WTC11 (cell line): ENCODE measurements at regions of chr1 and their contacts with region 1.

Region 1: GRCh38 chr1:152869808-152870419 is 8.2 kb upstream of the SMCP start:
- DNase-seq: peak; percentile 26
- ATAC-seq: peak; percentile 74
- H3K4me3 Mint-ChIP-seq: no peak overlapping the region
- H3K27ac Mint-ChIP-seq: no peak overlapping the region
- H3K4me1 Mint-ChIP-seq: no peaks in the 10 kb centered on the region
- H3K27me3 Mint-ChIP-seq: no peaks in the 10 kb centered on the region; the same call in 1 of the 2 replicates
- CTCF ChIP-seq: no peak

Region 2: GRCh38 chr1:152582647-152583046 is 287.3 kb before region 1 on chr1:
- CTCF ChIA-PET with region 1: no interaction called
- POLR2A ChIA-PET with region 1: no interaction called
- DNase-seq: no peak
- ATAC-seq: no peak
- H3K4me3 Mint-ChIP-seq: no peak overlapping the region
- H3K27ac Mint-ChIP-seq: no peak overlapping the region
- H3K4me1 Mint-ChIP-seq: no peaks in the 10 kb centered on the region
- H3K27me3 Mint-ChIP-seq: peaks cover 7% of the 10 kb centered on the region
- CTCF ChIP-seq: no peak

Region 3: GRCh38 chr1:152926091-152926490 is 56.2 kb after region 1 on chr1:
- CTCF ChIA-PET with region 1: interaction called, 20 read pairs
- POLR2A ChIA-PET with region 1: no interaction called
- DNase-seq: no peak
- ATAC-seq: peak; percentile 34; the same call in 1 of the 2 replicates
- H3K4me3 Mint-ChIP-seq: no peak overlapping the region
- H3K27ac Mint-ChIP-seq: no peak overlapping the region
- H3K4me1 Mint-ChIP-seq: no peaks in the 10 kb centered on the region
- H3K27me3 Mint-ChIP-seq: no peaks in the 10 kb centered on the region
- CTCF ChIP-seq: no peak

Region 4: DNA sequence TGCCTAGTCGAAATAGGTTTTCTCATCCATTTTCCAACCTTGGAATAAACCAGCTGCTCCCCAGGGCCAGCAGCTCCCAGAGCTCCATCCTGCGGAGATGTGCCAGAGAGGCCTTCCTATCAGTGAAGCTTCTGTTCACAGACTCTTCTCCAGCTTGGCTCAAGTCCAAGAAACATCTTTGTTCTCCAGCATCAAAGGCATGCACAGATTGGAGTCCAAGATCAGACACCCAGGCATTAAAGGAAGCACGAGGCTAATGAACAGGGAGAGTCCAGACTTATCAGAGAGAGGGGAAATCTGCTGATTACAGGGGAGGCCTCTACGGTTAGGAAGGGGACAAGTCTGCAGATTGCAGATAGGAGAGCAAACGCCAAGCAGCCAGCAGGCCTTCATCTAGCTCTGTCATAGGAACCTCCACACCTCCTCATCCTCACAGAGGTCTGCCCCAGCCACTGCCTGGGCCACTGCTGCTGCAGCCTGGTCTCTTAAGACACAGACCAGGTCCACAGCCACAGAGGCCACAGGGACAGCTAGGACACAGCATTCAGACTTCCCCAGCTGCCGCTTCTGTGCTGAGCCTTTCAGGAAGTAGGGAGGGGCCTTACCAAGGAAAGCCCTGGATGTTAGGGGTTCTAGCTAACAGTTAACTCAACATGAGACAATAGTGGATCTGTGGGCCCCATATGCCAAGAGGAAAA is 350.8 kb after region 1 on chr1:
- CTCF ChIA-PET with region 1: interaction called, 17 read pairs
- POLR2A ChIA-PET with region 1: no interaction called
- DNase-seq: no peak
- ATAC-seq: no peak
- H3K4me3 Mint-ChIP-seq: no peak overlapping the region
- H3K27ac Mint-ChIP-seq: no peak overlapping the region
- H3K4me1 Mint-ChIP-seq: no peaks in the 10 kb centered on the region
- H3K27me3 Mint-ChIP-seq: peaks cover 2% of the 10 kb centered on the region; the same call in 1 of the 2 replicates
- CTCF ChIP-seq: no peak

Region 5: GRCh38 chr1:153232553-153232952 is 362.6 kb after region 1 on chr1:
- CTCF ChIA-PET with region 1: interaction called, 23 read pairs
- POLR2A ChIA-PET with region 1: no interaction called
- DNase-seq: no peak
- ATAC-seq: no peak
- H3K4me3 Mint-ChIP-seq: no peak overlapping the region
- H3K27ac Mint-ChIP-seq: no peak overlapping the region
- H3K4me1 Mint-ChIP-seq: no peaks in the 10 kb centered on the region
- H3K27me3 Mint-ChIP-seq: peaks cover 3% of the 10 kb centered on the region; the same call in 1 of the 2 replicates
- CTCF ChIP-seq: no peak